Activated T-helper 2 cell treated with anti-CD3 and anti-CD28 coated beads, Interferon-gamma antibody, Interleukin-2, Interleukin-4, amounts not matched to agents 10 μg/mL and 5 μg/mL and 100 μg/mL, durations not matched to agents 14 hours and 24 hours and 36 hours (primary cell): ENCODE measurements at regions of chr15 and their contacts with region 1.

Region 1: GRCh38 chr15:67150028-67150860 is 84.8 kb downstream of the SMAD3 start:
- DNase-seq: no peak
- H3K4me3 Mint-ChIP-seq: peak overlapping the region; percentile 46
- H3K27ac Mint-ChIP-seq: peak overlapping the region; percentile 71
- H3K4me1 Mint-ChIP-seq: peaks cover 60% of the 10 kb centered on the region
- H3K27me3 Mint-ChIP-seq: no peaks in the 10 kb centered on the region

Region 2: DNA sequence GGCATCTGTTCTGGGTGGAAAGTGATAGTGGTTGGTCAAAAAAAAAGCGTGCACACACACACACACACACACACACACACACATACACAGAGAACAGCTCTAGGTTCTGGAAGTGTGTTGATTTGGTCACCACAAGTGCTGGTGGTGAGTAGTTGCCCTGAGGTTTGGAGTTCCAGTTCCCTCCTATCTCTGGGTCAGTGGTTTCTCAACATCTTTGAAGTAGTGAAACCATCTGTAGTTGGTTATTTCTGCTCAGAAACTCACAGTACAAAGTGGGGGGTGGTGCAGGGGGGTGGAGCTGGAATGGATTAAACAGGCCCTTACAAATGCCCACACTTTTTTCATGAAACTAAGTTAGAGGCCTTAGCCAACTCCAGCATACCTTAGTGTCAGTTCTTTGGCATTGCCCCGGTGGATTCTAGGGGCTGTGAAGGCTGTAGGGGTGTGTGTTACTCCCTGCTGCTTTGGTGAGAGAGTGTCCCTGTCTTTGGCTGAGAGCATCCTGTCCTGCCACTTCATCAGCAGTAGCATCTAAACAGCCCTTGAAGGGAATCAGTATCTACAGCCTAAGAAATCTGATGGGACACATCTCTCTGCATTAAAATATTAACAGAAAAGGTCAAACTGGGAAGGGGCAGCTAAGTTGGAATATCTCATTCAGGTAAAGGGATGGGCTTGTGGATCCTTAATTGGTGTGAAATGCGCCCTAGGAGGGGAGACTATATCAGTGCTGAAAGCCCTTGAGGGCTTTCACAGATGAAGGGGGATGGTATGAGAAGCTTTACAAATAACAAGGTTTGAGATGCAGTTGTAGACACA is 64.2 kb before region 1 on chr15:
- intact Hi-C with region 1: loop called (anchors 1 kb)
- DNase-seq: peak; percentile 44
- H3K4me3 Mint-ChIP-seq: peak overlapping the region; percentile 24
- H3K27ac Mint-ChIP-seq: peak overlapping the region; percentile 74
- H3K4me1 Mint-ChIP-seq: peaks cover 94% of the 10 kb centered on the region
- H3K27me3 Mint-ChIP-seq: no peaks in the 10 kb centered on the region